Endothelial cell of umbilical vein (primary cell): ENCODE measurements at regions of chr12 and their contacts with region 1.

Region 1: GRCh38 chr12:65306366-65307168 is 28.1 kb downstream of the MSRB3 start:
- DNase-seq: peak; percentile 83
- H3K4me3 ChIP-seq: peak overlapping the region in 1 of 3 experiments; percentile 44
- H3K27ac ChIP-seq: peak overlapping the region; percentile 96
- H3K4me1 ChIP-seq: peaks cover 46% of the 10 kb centered on the region
- H3K27me3 ChIP-seq: no peaks in the 10 kb centered on the region
- CTCF ChIP-seq: peak; percentile 51 to 53
- POLR2A ChIP-seq: no peak

Region 2: GRCh38 chr12:65536876-65537661 is 230.5 kb after region 1 on chr12:
- CTCF ChIA-PET with region 1: interaction called, 5 read pairs
- POLR2A ChIA-PET with region 1: no interaction called
- dilution Hi-C with region 1: no loop called
- intact Hi-C with region 1: loop called (anchors 1 kb)
- DNase-seq: peak; percentile 94
- H3K4me3 ChIP-seq: no peak overlapping the region
- H3K27ac ChIP-seq: peak overlapping the region; percentile 98
- H3K4me1 ChIP-seq: peaks cover 58% of the 10 kb centered on the region
- H3K27me3 ChIP-seq: no peaks in the 10 kb centered on the region
- CTCF ChIP-seq: no peak
- POLR2A ChIP-seq: peak; percentile 45

Region 3: GRCh38 chr12:65715961-65716360 is 409.4 kb after region 1 on chr12:
- CTCF ChIA-PET with region 1: no interaction called
- POLR2A ChIA-PET with region 1: no interaction called
- dilution Hi-C with region 1: no loop called
- intact Hi-C with region 1: no loop called
- DNase-seq: no peak
- H3K4me3 ChIP-seq: no peak overlapping the region
- H3K27ac ChIP-seq: no peak overlapping the region
- H3K4me1 ChIP-seq: no peaks in the 10 kb centered on the region
- H3K27me3 ChIP-seq: no peaks in the 10 kb centered on the region
- CTCF ChIP-seq: no peak
- POLR2A ChIP-seq: no peak

Region 4: GRCh38 chr12:65948320-65949008 is 641.9 kb after region 1 on chr12:
- CTCF ChIA-PET with region 1: no interaction called
- POLR2A ChIA-PET with region 1: no interaction called
- dilution Hi-C with region 1: no loop called
- intact Hi-C with region 1: loop called (anchors 5 kb)
- DNase-seq: peak; percentile 100
- H3K4me3 ChIP-seq: peak overlapping the region in 2 of 3 experiments; percentile 13 to 42
- H3K27ac ChIP-seq: peak overlapping the region; percentile 96
- H3K4me1 ChIP-seq: peaks cover 67% of the 10 kb centered on the region
- H3K27me3 ChIP-seq: no peaks in the 10 kb centered on the region
- CTCF ChIP-seq: no peak
- POLR2A ChIP-seq: no peak

Region 5: GRCh38 chr12:66087365-66087943 is 780.9 kb after region 1 on chr12:
- CTCF ChIA-PET with region 1: interaction called, 10 read pairs
- POLR2A ChIA-PET with region 1: no interaction called
- dilution Hi-C with region 1: no loop called
- intact Hi-C with region 1: loop called (anchors 1 kb)
- DNase-seq: peak; percentile 67
- H3K4me3 ChIP-seq: no peak overlapping the region
- H3K27ac ChIP-seq: no peak overlapping the region
- H3K4me1 ChIP-seq: peaks cover 2% of the 10 kb centered on the region
- H3K27me3 ChIP-seq: no peaks in the 10 kb centered on the region
- CTCF ChIP-seq: peak; percentile 65 to 76
- POLR2A ChIP-seq: no peak